ENCODE measurements at regions of chr6 and their contacts with region 1.

Region 1: GRCh38 chr6:128252341-128253176 is 267.8 kb downstream of the PTPRK start:
- DNase-seq: no peak
- H3K4me3 Mint-ChIP-seq: no peak overlapping the region
- H3K27ac Mint-ChIP-seq: no peak overlapping the region
- H3K4me1 Mint-ChIP-seq: peaks cover 23% of the 10 kb centered on the region
- H3K27me3 Mint-ChIP-seq: no peaks in the 10 kb centered on the region
- CTCF ChIP-seq: no peak

Region 2: DNA sequence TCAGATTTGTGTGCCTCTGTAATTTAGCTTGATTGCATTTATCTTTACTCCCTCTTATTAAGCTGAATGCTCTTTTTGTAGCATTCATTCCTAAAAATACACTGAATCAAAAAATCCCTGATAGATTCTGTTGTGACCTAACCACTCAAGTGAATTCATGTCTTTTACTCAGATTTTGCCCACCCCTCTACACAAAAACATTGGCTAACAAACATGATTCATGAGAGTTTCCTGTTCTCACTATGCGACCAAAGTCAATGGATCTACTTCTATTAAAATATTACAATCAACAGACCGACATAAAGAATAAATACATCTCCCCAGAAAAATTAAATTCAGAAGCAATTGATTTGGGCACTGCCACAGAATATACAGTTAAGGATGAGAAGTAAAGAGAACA is 252.2 kb before region 1 on chr6:
- CTCF ChIA-PET with region 1: no interaction called
- intact Hi-C with region 1: loop called (anchors 5 kb)
- DNase-seq: no peak
- H3K4me3 Mint-ChIP-seq: no peak overlapping the region
- H3K27ac Mint-ChIP-seq: no peak overlapping the region
- H3K4me1 Mint-ChIP-seq: no peaks in the 10 kb centered on the region
- H3K27me3 Mint-ChIP-seq: no peaks in the 10 kb centered on the region
- CTCF ChIP-seq: no peak

Region 3: DNA sequence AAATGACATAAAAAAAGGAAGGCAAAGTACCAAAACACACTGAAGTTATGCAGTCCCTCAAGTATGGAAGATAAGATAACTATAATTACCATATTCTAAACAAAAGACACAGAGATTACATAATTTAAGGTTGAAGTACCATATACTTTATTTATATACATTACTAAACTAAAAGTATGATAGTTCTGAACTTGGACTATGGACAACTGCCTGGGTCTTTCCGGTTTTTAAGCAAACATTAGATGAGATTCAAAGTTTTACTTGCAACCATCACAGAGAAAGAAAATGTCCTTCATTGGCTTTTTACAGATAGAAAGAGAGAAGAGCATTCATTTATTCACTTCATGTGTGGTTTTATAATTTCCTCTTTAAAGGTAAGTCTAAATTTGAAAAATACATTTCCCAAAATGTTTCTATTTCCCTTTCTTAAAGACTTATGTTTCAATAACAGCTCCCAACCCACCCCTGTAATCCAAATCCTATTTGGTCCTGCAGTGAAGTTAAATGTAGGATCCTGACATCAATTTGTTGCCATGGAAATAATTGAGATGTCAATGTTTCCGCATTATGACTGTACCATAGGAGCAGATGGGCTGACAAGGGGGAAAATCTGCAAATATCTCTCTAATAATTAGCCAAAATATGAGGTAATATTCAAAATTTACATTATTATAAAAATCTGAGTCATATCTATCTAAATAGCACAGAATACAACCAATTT is 204.1 kb after region 1 on chr6:
- CTCF ChIA-PET with region 1: no interaction called
- intact Hi-C with region 1: no loop called
- DNase-seq: no peak
- H3K4me3 Mint-ChIP-seq: no peak overlapping the region
- H3K27ac Mint-ChIP-seq: no peak overlapping the region
- H3K4me1 Mint-ChIP-seq: peaks cover 53% of the 10 kb centered on the region
- H3K27me3 Mint-ChIP-seq: no peaks in the 10 kb centered on the region
- CTCF ChIP-seq: no peak

Region 4: DNA sequence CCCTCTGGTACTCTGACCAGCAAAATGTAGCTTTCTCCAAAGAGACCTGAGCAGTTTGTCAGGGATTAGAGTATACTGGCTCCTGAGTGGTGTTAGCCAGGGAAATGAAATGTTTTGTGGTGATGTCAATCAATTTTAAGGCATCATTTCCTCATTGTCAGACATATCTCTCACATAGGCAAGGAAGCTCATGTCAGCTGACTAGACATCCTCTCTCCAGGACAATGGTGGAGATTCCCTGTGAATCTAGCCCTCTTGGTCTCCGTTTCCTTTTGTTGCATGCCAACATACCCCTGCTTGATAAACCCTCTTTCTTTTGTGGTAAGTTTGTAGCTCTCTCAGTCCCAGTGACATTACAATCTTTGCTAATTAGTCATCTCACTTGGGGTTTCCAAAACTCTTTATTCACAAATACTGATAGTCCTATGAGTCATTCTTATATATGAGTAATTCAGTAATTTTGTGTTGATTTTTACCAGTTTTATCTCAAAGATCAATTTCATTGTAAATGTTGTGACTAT is 403.5 kb after region 1 on chr6:
- CTCF ChIA-PET with region 1: no interaction called
- intact Hi-C with region 1: no loop called
- DNase-seq: peak; percentile 33
- H3K4me3 Mint-ChIP-seq: no peak overlapping the region
- H3K27ac Mint-ChIP-seq: peak overlapping the region; percentile 93
- H3K4me1 Mint-ChIP-seq: peaks cover 50% of the 10 kb centered on the region
- H3K27me3 Mint-ChIP-seq: peaks cover 10% of the 10 kb centered on the region
- CTCF ChIP-seq: no peak

Measured in Calu3 (cell line).